Transverse colon (tissue), 4 donors: ENCODE measurements at regions of chr7 and their contacts with region 1.

Region 1: GRCh38 chr7:27196287-27196767 is 3.6 kb downstream of the HOXA13 start:
- DNase-seq: peak; percentile 95
- H3K4me3 ChIP-seq: peak overlapping the region; percentile 3 to 73 (median 58)
- H3K27ac ChIP-seq: peak overlapping the region; percentile 95 to 99 (median 98)
- H3K4me1 ChIP-seq: peaks cover 0 to 38% (median 13%) of the 10 kb centered on the region in 4 donors
- H3K27me3 ChIP-seq: peaks cover 77% of the 10 kb centered on the region
- CTCF ChIP-seq: peak; percentile 73 to 88 (median 79)
- EP300 ChIP-seq: no peak
- POLR2A ChIP-seq: no peak

Region 2: GRCh38 chr7:25862260-25863037 is 1333.9 kb before region 1 on chr7:
- in situ Hi-C with region 1: loop called in 2 of 4 experiments (anchors 25 kb)
- intact Hi-C with region 1: no loop called
- DNase-seq: peak; percentile 99
- H3K4me3 ChIP-seq: peak overlapping the region in 1 of 4 donors; percentile 34
- H3K27ac ChIP-seq: peak overlapping the region; percentile 53 to 62 (median 58)
- H3K4me1 ChIP-seq: peaks cover 3 to 27% (median 13%) of the 10 kb centered on the region in 4 donors
- H3K27me3 ChIP-seq: peaks cover 100% of the 10 kb centered on the region
- CTCF ChIP-seq: no peak
- EP300 ChIP-seq: no peak
- POLR2A ChIP-seq: no peak

Region 3: GRCh38 chr7:27576360-27576944 is 380.1 kb after region 1 on chr7:
- in situ Hi-C with region 1: loop called in 3 of 4 experiments (anchors 10 to 25 kb)
- intact Hi-C with region 1: loop called (anchors 10 kb)
- DNase-seq: no peak
- H3K4me3 ChIP-seq: no peak overlapping the region
- H3K27ac ChIP-seq: no peak overlapping the region
- H3K4me1 ChIP-seq: peaks cover 0 to 4% (median 0%) of the 10 kb centered on the region in 4 donors
- H3K27me3 ChIP-seq: no peaks in the 10 kb centered on the region
- CTCF ChIP-seq: peak; percentile 59 to 70 (median 68)
- EP300 ChIP-seq: no peak
- POLR2A ChIP-seq: no peak

Region 4: GRCh38 chr7:27921081-27921836 is 724.9 kb after region 1 on chr7:
- in situ Hi-C with region 1: loop called in 3 of 4 experiments (anchors 10 to 25 kb)
- intact Hi-C with region 1: loop called (anchors 5 kb)
- DNase-seq: peak; percentile 22
- H3K4me3 ChIP-seq: peak overlapping the region in 1 of 4 donors; percentile 19
- H3K27ac ChIP-seq: no peak overlapping the region
- H3K4me1 ChIP-seq: peaks cover 0 to 17% (median 7%) of the 10 kb centered on the region in 4 donors
- H3K27me3 ChIP-seq: no peaks in the 10 kb centered on the region
- CTCF ChIP-seq: peak; percentile 46 to 67 (median 50)
- EP300 ChIP-seq: no peak
- POLR2A ChIP-seq: no peak

Region 5: GRCh38 chr7:28096713-28097112 is 900.4 kb after region 1 on chr7:
- in situ Hi-C with region 1: no loop called
- intact Hi-C with region 1: loop called (anchors 5 kb)
- DNase-seq: peak; percentile 44
- H3K4me3 ChIP-seq: no peak overlapping the region
- H3K27ac ChIP-seq: peak overlapping the region in 2 of 4 donors; percentile 1 to 47
- H3K4me1 ChIP-seq: peaks cover 0 to 18% (median 4%) of the 10 kb centered on the region in 4 donors
- H3K27me3 ChIP-seq: no peaks in the 10 kb centered on the region
- CTCF ChIP-seq: peak; percentile 77 to 84 (median 81)
- EP300 ChIP-seq: no peak
- POLR2A ChIP-seq: no peak

Region 6: DNA sequence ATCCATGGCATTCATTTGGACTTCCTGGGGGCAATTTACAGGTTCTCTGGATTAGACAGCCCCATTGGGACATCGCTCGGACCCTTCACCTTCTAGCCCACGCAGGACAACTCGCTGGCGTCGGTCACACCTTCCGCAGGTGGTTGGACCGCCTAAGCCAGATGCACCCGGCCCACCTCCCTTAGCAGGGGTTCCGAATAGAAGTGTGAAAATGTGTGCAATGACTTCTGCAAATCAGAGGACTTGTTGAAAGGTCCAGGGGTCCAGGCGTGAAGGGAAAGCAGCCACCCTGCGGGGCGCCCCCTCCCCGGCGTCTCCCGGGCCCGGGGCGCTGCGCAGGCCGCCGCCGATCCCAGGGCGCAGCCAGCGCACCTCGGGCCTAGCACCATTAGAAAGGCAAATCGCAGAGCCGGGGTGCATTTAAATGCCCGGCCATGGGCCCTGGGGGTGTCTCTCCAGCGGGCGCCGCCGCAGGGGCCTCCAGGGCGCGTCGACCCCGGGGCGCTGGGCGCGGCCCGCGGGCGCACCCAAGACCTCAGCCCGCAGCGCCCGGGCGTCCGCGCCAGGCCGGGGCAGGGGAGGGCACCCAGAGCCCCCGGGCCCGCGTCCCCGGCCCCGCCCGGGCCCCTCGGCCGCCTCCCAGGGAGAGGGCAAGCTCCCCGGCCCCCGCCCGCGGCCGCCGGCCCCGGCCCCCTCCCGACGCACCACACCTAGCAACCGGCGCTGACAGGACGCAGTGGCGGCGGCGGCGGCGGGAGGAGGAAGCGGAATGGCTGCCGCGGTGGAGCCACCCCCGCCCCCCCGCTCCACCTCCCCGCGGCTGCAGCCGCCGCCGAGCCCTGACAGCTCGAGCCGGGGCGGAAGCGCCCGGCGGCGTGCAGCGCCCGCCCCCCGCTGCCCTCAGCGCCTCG is 983.0 kb after region 1 on chr7:
- in situ Hi-C with region 1: no loop called
- intact Hi-C with region 1: loop called (anchors 10 kb)
- DNase-seq: peak; percentile 79
- H3K4me3 ChIP-seq: peak overlapping the region; percentile 57 to 75 (median 60)
- H3K27ac ChIP-seq: peak overlapping the region; percentile 76 to 86 (median 82)
- H3K4me1 ChIP-seq: peaks cover 0 to 52% (median 11%) of the 10 kb centered on the region in 4 donors
- H3K27me3 ChIP-seq: no peaks in the 10 kb centered on the region
- CTCF ChIP-seq: no peak
- EP300 ChIP-seq: no peak
- POLR2A ChIP-seq: no peak